Colonic mucosa (tissue), 4 donors: ENCODE measurements at regions of chr19 and their contacts with region 1.

Region 1: GRCh38 chr19:44113138-44113783 is at the start of gene ZNF225:
- DNase-seq: peak; percentile 98
- H3K4me3 ChIP-seq: peak within 1 kb of the TSS; percentile 67
- H3K27ac ChIP-seq: peak within 1 kb of the TSS; percentile 5
- H3K4me1 ChIP-seq: peaks cover 7% of the 10 kb centered on the region
- H3K27me3 ChIP-seq: no peaks in the 10 kb centered on the region
- CTCF ChIP-seq: no peak
- total RNA-seq, gene ZNF225: 2.8 TPM

Region 2: GRCh38 chr19:43934985-43935708 is 178.1 kb before region 1 on chr19 and contains the start of gene ZNF45:
- intact Hi-C with region 1: no loop called
- DNase-seq: peak; percentile 94
- H3K4me3 ChIP-seq: peak within 1 kb of the TSS; percentile 69
- H3K27ac ChIP-seq: peak within 1 kb of the TSS; percentile 82
- H3K4me1 ChIP-seq: no peaks in the 10 kb centered on the region
- H3K27me3 ChIP-seq: no peaks in the 10 kb centered on the region
- CTCF ChIP-seq: no peak
- total RNA-seq, gene ZNF45: 8.1 to 8.7 TPM

Region 3: DNA sequence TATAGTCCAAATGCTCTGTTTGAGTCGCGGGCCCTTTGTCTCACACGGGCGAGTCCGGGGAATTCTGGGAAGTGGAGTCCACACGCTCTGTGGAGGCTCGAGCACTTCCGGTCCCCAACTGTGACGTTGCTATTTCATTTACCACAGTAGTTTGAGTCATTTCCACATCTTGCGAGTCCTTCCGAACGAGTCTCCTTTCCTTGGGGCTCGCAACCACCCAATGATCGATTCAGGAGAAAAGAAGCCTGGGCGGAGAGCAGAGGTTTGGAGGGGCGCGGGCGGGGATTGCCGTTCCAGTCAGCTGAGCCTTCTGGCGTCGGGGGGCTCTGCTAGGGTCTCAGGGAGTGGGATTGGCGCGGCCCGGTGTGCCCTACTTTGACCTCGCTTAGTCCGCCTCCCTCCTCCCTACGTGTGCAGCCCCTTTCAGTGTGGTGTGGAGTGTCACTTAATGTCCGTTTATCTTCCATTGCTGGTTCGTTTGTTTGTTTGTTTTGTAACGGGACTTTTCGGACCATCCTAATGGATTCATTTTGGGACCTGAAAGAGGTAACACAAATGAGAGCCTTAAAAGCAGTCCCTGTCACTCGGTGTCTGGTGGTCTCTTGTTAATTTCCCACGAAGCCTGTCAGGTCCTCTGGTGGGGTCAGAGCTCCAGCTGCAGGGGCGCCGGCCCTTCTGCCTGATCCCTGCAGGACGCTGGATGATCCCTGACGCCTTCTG is 87.9 kb before region 1 on chr19 and contains the start of gene ZNF222:
- intact Hi-C with region 1: loop called (anchors 10 kb)
- DNase-seq: peak; percentile 90
- H3K4me3 ChIP-seq: peak within 1 kb of the TSS; percentile 76
- H3K27ac ChIP-seq: no peak within 1 kb of the TSS
- H3K4me1 ChIP-seq: no peaks in the 10 kb centered on the region
- H3K27me3 ChIP-seq: no peaks in the 10 kb centered on the region
- CTCF ChIP-seq: no peak
- total RNA-seq, gene ZNF222: 1.2 to 2.4 TPM